ENCODE measurements at regions of chr6 and their contacts with region 1.

Region 1: GRCh38 chr6:27772261-27773001 is 139.8 kb downstream of the OR2B2 start:
- DNase-seq: peak; percentile 86

Region 2: DNA sequence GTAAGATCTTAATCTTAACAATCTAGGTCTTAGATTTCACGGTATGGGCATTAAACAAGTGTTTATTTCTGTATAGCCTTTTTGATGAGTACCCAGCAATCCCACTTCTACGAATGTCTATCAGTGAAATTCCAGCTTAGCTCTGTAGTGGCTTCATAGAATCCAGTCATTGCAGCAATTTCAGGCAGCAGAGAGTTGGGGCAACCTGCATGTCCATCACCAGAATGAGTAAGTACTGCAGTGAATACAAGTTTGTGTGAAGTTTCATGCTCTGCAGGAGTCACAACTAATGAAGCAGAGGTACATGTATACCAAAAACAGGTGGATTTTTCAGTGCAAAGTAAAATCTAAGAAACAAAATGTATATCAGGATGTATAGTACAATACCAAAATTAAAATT is 12.0 kb before region 1 on chr6:
- CTCF ChIA-PET with region 1: interaction called, 13 read pairs
- POLR2A ChIA-PET with region 1: interaction called, 9 read pairs
- DNase-seq: no peak

Region 3: GRCh38 chr6:27782748-27783147 is 10.3 kb after region 1 on chr6:
- CTCF ChIA-PET with region 1: interaction called, 16 read pairs
- POLR2A ChIA-PET with region 1: interaction called, 9 read pairs
- DNase-seq: no peak

Region 4: GRCh38 chr6:27795697-27796494 is 23.5 kb after region 1 on chr6:
- CTCF ChIA-PET with region 1: interaction called, 13 read pairs
- POLR2A ChIA-PET with region 1: interaction called, 5 read pairs
- DNase-seq: peak; percentile 69